Heart left ventricle (tissue), 16 donors: ENCODE measurements at regions of chr15 and their contacts with region 1.

Region 1: DNA sequence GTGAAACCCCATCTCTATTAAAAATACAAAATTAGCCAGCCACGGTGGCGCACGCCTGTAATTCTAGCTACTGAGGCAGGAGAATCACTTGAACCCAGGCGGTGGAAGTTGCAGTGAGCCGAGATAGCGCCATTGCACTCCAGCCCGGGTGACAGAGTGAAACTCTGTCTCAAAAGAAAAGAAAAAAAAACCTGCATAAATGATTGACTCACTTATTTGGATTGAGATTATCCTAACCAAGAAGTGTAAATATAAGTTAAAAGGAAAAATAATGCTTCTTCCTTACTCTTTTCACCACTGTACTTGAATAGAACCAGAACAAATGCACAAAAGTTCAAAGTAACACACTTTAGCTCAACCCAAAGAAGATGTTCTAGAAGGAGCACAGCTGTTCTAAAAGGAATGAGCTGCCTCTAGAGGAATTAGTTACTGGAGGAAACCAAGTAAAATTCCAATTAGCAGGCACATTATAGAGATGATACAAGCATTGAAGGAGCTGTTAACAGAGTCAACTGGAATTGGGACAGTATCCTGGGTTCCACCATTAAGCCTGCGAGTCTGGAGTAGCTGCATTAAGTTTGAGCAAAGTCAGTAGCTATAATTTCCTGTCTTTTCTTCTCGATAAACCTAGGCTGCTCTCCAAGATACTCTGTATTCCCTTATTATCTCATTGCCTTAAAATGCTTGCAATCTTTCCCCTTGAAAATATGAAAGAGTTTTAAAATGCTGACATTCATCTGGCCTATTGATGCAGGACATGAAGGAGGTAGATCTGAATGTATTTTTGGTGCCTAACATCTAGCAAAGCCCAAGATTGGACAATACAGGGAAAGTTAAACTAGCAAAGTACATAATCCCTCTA is 9.5 kb downstream of the MTHFS start:
- DNase-seq: no peak
- ATAC-seq: no peak
- H3K4me3 ChIP-seq: no peak overlapping the region
- H3K27ac ChIP-seq: no peak overlapping the region
- H3K4me1 ChIP-seq: no peaks in the 10 kb centered on the region
- H3K27me3 ChIP-seq: no peaks in the 10 kb centered on the region
- CTCF ChIP-seq: no peak
- POLR2A ChIP-seq: no peak

Region 2: DNA sequence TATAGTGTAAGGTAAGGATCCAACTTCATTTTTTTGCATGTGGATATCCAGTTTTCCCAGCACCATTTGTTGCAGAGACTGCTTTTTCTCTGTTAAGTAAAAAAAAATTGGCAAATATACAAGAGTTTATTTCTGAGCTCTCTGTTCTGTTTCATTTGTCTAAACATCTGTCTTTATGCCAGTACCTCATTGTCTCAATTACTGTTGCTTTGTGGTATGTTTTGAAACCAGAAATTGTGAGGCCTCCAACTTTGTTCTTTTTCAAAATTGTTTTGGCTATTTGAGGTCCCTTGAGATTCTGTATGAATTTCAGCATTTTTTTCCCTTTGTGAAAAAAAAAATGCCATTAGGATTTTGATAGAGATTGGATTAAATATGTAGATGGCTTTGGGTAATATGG is 304.6 kb before region 1 on chr15:
- intact Hi-C with region 1: no loop called
- DNase-seq: no peak
- ATAC-seq: no peak
- H3K4me3 ChIP-seq: no peak overlapping the region
- H3K27ac ChIP-seq: no peak overlapping the region
- H3K4me1 ChIP-seq: no peaks in the 10 kb centered on the region
- H3K27me3 ChIP-seq: peaks cover 0 to 6% (median 0%) of the 10 kb centered on the region in 9 donors
- CTCF ChIP-seq: no peak
- POLR2A ChIP-seq: no peak

Region 3: GRCh38 chr15:79981831-79982455 is 94.7 kb after region 1 on chr15:
- intact Hi-C with region 1: no loop called
- DNase-seq: no peak
- ATAC-seq: no peak
- H3K4me3 ChIP-seq: no peak overlapping the region
- H3K27ac ChIP-seq: peak overlapping the region in 1 of 12 donors; percentile 64
- H3K4me1 ChIP-seq: peaks cover 0 to 51% (median 8%) of the 10 kb centered on the region in 12 donors
- H3K27me3 ChIP-seq: no peaks in the 10 kb centered on the region
- CTCF ChIP-seq: no peak
- POLR2A ChIP-seq: no peak

Region 4: DNA sequence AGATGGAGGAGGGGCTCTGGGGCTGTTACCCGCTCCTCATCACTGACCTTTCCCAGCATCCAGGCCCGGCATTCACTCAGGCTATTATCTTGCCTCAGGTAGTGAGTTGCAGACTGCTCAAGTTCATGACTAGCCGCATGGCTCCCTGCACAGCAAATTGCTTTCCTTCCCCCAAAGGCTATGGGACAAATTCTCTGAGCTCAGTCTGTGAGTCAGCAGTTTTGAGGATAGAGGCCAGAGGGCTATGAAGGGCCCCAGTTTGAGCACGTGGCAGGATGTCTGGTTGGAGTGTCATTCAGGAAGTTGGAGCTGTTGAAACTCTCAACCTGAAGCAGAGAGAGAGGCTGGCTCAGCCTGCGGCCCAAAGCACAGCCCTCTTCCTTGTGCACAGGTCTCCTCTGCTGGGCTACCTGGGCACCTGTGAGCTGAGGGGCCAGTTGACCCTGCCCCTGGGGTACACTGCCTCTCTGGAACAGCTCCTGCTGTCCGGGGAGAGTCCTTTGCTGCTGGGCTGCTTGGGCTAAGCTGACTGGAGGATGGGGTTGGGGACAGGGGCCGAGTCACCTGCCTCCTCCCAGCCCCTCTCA is 273.4 kb after region 1 on chr15:
- intact Hi-C with region 1: loop called in 2 of 10 experiments (anchors 10 kb)
- DNase-seq: peak in 4 of 5 donors; percentile 41 to 62 (median 51)
- ATAC-seq: peak; percentile 39 to 87 (median 76)
- H3K4me3 ChIP-seq: no peak overlapping the region
- H3K27ac ChIP-seq: peak overlapping the region in 2 of 12 donors; percentile 36 to 72
- H3K4me1 ChIP-seq: peaks cover 0 to 29% (median 6%) of the 10 kb centered on the region in 12 donors
- H3K27me3 ChIP-seq: no peaks in the 10 kb centered on the region
- CTCF ChIP-seq: no peak
- POLR2A ChIP-seq: no peak